AG04450 (cell line): ENCODE measurements at regions of chr14 and their contacts with region 1.

Region 1: DNA sequence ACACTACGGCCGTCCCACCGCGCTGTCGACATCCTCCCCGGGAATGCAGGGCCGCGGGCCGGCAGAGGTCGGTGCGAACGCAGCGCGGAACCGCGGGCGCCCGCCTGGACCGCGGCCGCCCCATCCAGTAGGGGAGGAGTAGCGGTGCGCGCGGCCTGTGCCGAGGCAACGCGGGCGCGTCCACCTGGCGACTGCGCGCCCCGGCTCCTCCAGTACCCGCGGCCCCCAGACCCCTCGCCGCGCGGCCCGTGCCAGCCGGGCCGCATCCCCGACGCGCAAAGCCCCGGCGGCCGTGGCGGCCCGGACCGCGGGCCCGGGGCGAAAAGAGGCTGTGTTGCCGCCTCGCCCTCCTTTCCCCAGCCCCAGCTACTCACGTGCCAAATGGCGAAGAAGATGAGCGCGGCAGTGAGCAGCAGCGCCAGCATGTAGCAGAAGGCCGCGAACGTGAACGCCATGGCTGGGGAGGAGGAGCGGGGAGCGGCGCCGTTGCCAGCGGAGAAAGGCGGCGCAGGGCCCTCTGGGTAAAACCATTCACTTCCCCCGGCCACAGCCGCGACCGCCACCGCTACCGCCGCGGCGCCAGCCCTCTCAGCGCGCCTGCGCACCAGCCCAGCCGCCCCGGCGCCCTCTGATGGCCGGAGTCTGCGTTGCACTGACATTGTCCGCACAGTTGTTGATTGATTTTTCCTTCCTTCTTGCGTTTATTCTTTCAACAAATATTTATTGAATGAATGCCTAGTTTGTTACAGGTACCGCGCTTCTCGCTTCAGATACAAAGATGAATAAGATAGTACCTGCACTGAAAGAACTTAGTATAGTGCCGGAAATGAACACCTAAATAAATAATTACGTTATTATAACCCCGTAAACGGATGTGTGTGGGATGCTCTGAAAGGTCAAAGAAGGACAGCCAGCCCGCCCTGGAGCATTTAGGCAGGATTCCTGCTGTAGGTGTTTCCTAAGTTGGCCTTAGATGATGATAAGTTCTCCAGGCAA is at the start of gene CNIH1:
- DNase-seq: peak; percentile 72
- H3K4me3 ChIP-seq: peak within 1 kb of the TSS; percentile 80
- H3K27ac ChIP-seq: peak within 1 kb of the TSS; percentile 94
- H3K27me3 ChIP-seq: peaks cover 2% of the 10 kb centered on the region
- CTCF ChIP-seq: peak; percentile 87
- polyA plus RNA-seq, gene CNIH1: 248 and 254 TPM in 2 replicates

Region 2: GRCh38 chr14:54374117-54374884 is 66.9 kb before region 1 on chr14:
- CTCF ChIA-PET with region 1: no interaction called
- POLR2A ChIA-PET with region 1: no interaction called
- DNase-seq: no peak
- H3K4me3 ChIP-seq: no peak overlapping the region
- H3K27ac ChIP-seq: no peak overlapping the region
- H3K27me3 ChIP-seq: peaks cover 12% of the 10 kb centered on the region
- CTCF ChIP-seq: no peak

Region 3: GRCh38 chr14:54503476-54504257 is 62.5 kb after region 1 on chr14:
- CTCF ChIA-PET with region 1: no interaction called
- POLR2A ChIA-PET with region 1: no interaction called
- DNase-seq: no peak
- H3K4me3 ChIP-seq: no peak overlapping the region
- H3K27ac ChIP-seq: no peak overlapping the region
- H3K27me3 ChIP-seq: peaks cover 4% of the 10 kb centered on the region
- CTCF ChIP-seq: peak; percentile 57

Region 4: GRCh38 chr14:54547583-54547982 is 106.4 kb after region 1 on chr14:
- CTCF ChIA-PET with region 1: no interaction called
- POLR2A ChIA-PET with region 1: no interaction called
- DNase-seq: no peak
- H3K4me3 ChIP-seq: no peak overlapping the region
- H3K27ac ChIP-seq: no peak overlapping the region
- H3K27me3 ChIP-seq: no peaks in the 10 kb centered on the region
- CTCF ChIP-seq: no peak

Region 5: GRCh38 chr14:55062517-55063351 is 621.6 kb after region 1 on chr14:
- CTCF ChIA-PET with region 1: interaction called, 11 read pairs
- POLR2A ChIA-PET with region 1: no interaction called
- DNase-seq: no peak
- H3K4me3 ChIP-seq: no peak overlapping the region
- H3K27ac ChIP-seq: no peak overlapping the region
- H3K27me3 ChIP-seq: no peaks in the 10 kb centered on the region
- CTCF ChIP-seq: no peak